ENCODE measurements at regions of chr13 and their contacts with region 1.

Region 1: GRCh38 chr13:31431722-31432137 is 232.0 kb downstream of the B3GLCT start:
- DNase-seq: peak in 6 of 9 experiments; percentile 11 to 57 (median 46)
- ATAC-seq: no peak
- H3K4me3 ChIP-seq: no peak overlapping the region
- H3K4me3 Mint-ChIP-seq: no peak overlapping the region
- H3K27ac ChIP-seq: no peak overlapping the region
- H3K27ac Mint-ChIP-seq: no peak overlapping the region
- H3K4me1 ChIP-seq: no peaks in the 10 kb centered on the region
- H3K4me1 Mint-ChIP-seq: no peaks in the 10 kb centered on the region
- H3K27me3 ChIP-seq: no peaks in the 10 kb centered on the region
- H3K27me3 Mint-ChIP-seq: peaks cover 19% of the 10 kb centered on the region
- CTCF ChIP-seq: peak; percentile 83

Region 2: GRCh38 chr13:31328549-31329235 is 103.0 kb before region 1 on chr13:
- CTCF ChIA-PET with region 1: no interaction called
- POLR2A ChIA-PET with region 1: no interaction called
- intact Hi-C with region 1: no loop called
- DNase-seq: no peak
- ATAC-seq: no peak
- H3K4me3 ChIP-seq: no peak overlapping the region
- H3K4me3 Mint-ChIP-seq: no peak overlapping the region
- H3K27ac ChIP-seq: no peak overlapping the region
- H3K27ac Mint-ChIP-seq: no peak overlapping the region
- H3K4me1 ChIP-seq: no peaks in the 10 kb centered on the region
- H3K4me1 Mint-ChIP-seq: no peaks in the 10 kb centered on the region
- H3K27me3 ChIP-seq: no peaks in the 10 kb centered on the region
- H3K27me3 Mint-ChIP-seq: no peaks in the 10 kb centered on the region
- CTCF ChIP-seq: no peak

Region 3: GRCh38 chr13:31742097-31742734 is 310.5 kb after region 1 on chr13:
- CTCF ChIA-PET with region 1: no interaction called
- POLR2A ChIA-PET with region 1: no interaction called
- intact Hi-C with region 1: loop called in 1 of 2 experiments (anchors 1 kb)
- DNase-seq: peak; percentile 16 to 73 (median 62)
- ATAC-seq: peak; percentile 61
- H3K4me3 ChIP-seq: no peak overlapping the region
- H3K4me3 Mint-ChIP-seq: no peak overlapping the region
- H3K27ac ChIP-seq: no peak overlapping the region
- H3K27ac Mint-ChIP-seq: no peak overlapping the region
- H3K4me1 ChIP-seq: no peaks in the 10 kb centered on the region
- H3K4me1 Mint-ChIP-seq: peaks cover 4% of the 10 kb centered on the region
- H3K27me3 ChIP-seq: no peaks in the 10 kb centered on the region
- H3K27me3 Mint-ChIP-seq: peaks cover 8% of the 10 kb centered on the region
- CTCF ChIP-seq: peak; percentile 97